Caco-2 (cell line): ENCODE measurements at regions of chr5 and their contacts with region 1.

Region 1: DNA sequence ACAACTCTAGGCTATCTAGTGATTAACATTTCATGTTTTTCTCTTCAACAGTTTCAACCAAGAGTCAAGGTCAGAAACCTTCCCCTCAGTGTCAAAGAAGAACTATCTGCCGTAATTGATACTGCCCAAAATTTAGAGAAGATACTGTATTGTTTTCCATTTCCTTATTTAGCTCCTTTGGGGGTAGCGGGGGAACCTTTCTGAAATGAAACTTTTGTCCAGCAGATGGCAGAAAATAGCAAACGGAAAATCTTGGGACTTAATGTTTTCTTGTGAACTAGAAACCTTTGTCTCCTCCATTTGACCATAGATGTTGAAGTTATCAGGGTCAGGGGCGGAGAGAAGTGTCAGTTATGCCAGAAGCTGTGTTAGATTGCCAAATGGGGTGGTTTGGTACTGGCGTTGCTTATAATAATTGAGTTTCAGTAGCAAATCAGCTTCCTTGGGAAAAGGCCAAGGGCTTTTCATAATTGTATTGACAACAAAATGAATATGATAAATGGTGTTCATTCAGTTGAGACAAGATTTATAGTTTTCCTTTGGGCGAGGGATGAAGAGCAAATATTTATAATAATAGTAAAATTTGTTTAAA is 101.7 kb upstream of the TLX3 start:
- DNase-seq: peak in 1 of 2 experiments; percentile 62
- H3K4me3 ChIP-seq: no peak overlapping the region
- H3K4me3 Mint-ChIP-seq: no peak overlapping the region
- H3K27ac Mint-ChIP-seq: no peak overlapping the region
- H3K4me1 ChIP-seq: no peaks in the 10 kb centered on the region
- H3K4me1 Mint-ChIP-seq: no peaks in the 10 kb centered on the region
- H3K27me3 ChIP-seq: no peaks in the 10 kb centered on the region
- H3K27me3 Mint-ChIP-seq: no peaks in the 10 kb centered on the region
- CTCF ChIP-seq: peak; percentile 52 to 64

Region 2: DNA sequence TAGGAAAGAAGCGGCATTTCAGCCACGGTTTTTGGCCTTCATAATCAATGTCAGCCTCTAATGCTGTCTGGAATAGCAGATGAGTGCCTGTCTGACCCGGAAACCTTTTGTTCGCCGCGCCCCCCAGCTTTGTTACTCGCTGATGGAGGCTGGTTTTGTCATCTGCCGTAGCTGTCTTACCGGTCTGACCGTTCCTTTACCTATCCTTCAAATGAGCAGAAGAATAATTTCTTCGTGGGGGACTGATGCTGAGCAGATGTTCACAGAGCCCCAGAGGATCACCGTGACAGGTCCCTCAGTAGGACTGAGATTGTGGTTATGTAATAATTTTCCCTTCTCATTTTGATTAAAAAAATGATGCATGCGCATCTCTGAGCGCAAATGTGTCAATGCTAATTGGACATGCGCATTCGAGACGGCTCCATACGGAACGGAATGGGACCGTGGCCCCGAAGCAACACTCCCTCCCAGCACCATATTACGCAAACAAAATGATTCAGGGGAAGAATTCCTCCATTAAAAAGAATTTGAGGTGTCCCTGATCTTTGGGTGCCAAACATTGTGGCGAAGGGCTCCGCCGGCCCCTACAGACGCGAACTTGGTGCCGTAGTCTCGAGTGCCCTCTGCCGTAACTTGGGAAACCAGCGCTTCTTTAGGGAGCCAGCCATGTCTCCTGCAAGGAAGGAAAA is 129.3 kb after region 1 on chr5:
- CTCF ChIA-PET with region 1: interaction called, 14 read pairs
- POLR2A ChIA-PET with region 1: no interaction called
- intact Hi-C with region 1: loop called (anchors 1 kb)
- DNase-seq: peak; percentile 48 to 50
- H3K4me3 ChIP-seq: peak overlapping the region; percentile 38
- H3K4me3 Mint-ChIP-seq: peak overlapping the region; percentile 71
- H3K27ac Mint-ChIP-seq: no peak overlapping the region
- H3K4me1 ChIP-seq: peaks cover 13% of the 10 kb centered on the region
- H3K4me1 Mint-ChIP-seq: no peaks in the 10 kb centered on the region
- H3K27me3 ChIP-seq: no peaks in the 10 kb centered on the region
- H3K27me3 Mint-ChIP-seq: peaks cover 4% of the 10 kb centered on the region
- CTCF ChIP-seq: peak; percentile 69 to 82

Region 3: GRCh38 chr5:171342362-171343111 is 135.2 kb after region 1 on chr5:
- CTCF ChIA-PET with region 1: interaction called, 14 read pairs
- POLR2A ChIA-PET with region 1: no interaction called
- intact Hi-C with region 1: loop called (anchors 1 kb)
- DNase-seq: peak; percentile 50 to 60
- H3K4me3 ChIP-seq: no peak overlapping the region
- H3K4me3 Mint-ChIP-seq: no peak overlapping the region
- H3K27ac Mint-ChIP-seq: no peak overlapping the region
- H3K4me1 ChIP-seq: peaks cover 8% of the 10 kb centered on the region
- H3K4me1 Mint-ChIP-seq: no peaks in the 10 kb centered on the region
- H3K27me3 ChIP-seq: no peaks in the 10 kb centered on the region
- H3K27me3 Mint-ChIP-seq: no peaks in the 10 kb centered on the region
- CTCF ChIP-seq: peak; percentile 69 to 75